Mammary epithelial cell (primary cell): ENCODE measurements at regions of chr4 and their contacts with region 1.

Region 1: GRCh38 chr4:111074647-111075046 is 451.8 kb upstream of the PITX2 start:
- DNase-seq: no peak
- H3K4me3 ChIP-seq: no peak overlapping the region
- H3K27ac ChIP-seq: no peak overlapping the region
- H3K4me1 ChIP-seq: no peaks in the 10 kb centered on the region
- H3K27me3 ChIP-seq: no peaks in the 10 kb centered on the region
- CTCF ChIP-seq: no peak

Region 2: DNA sequence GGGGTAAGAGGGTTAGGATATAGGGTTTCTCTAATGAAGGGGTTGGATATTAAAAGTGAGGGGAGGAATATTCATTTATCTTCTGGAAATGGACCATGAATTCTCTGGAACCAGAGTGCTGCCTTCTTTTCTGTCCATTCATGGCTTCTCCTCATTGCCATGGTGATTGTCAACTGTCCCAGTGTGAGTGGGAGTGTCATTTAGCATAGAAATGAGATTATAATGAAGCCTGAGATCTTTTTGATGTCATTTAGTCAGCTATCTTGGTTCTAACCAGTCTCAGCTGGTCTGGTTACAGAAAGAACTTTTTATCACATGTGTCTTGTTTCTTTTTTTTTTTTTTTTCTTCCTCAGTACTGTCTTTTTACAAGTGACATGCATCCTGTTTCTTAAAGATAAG is 45.5 kb after region 1 on chr4:
- CTCF ChIA-PET with region 1: no interaction called
- dilution Hi-C with region 1: no loop called
- in situ Hi-C with region 1: no loop called
- intact Hi-C with region 1: no loop called
- DNase-seq: no peak
- H3K4me3 ChIP-seq: no peak overlapping the region
- H3K27ac ChIP-seq: no peak overlapping the region
- H3K4me1 ChIP-seq: no peaks in the 10 kb centered on the region
- H3K27me3 ChIP-seq: no peaks in the 10 kb centered on the region
- CTCF ChIP-seq: no peak

Region 3: GRCh38 chr4:111143510-111143909 is 68.9 kb after region 1 on chr4:
- CTCF ChIA-PET with region 1: no interaction called
- dilution Hi-C with region 1: loop called (anchors 5 kb)
- in situ Hi-C with region 1: no loop called
- intact Hi-C with region 1: no loop called
- DNase-seq: no peak
- H3K4me3 ChIP-seq: no peak overlapping the region
- H3K27ac ChIP-seq: no peak overlapping the region
- H3K4me1 ChIP-seq: no peaks in the 10 kb centered on the region
- H3K27me3 ChIP-seq: no peaks in the 10 kb centered on the region
- CTCF ChIP-seq: no peak